ENCODE measurements at regions of chr14 and their contacts with region 1.

Region 1: GRCh38 chr14:68816262-68816942 is 23.5 kb upstream of the ZFP36L1 start:
- DNase-seq: peak; percentile 94
- ATAC-seq: peak; percentile 61
- H3K4me3 Mint-ChIP-seq: peak overlapping the region; percentile 38
- H3K27ac Mint-ChIP-seq: no peak overlapping the region
- H3K4me1 Mint-ChIP-seq: peaks cover 75% of the 10 kb centered on the region
- H3K27me3 Mint-ChIP-seq: peaks cover 2% of the 10 kb centered on the region; the same call in 1 of the 2 replicates
- CTCF ChIP-seq: peak; percentile 88

Region 2: GRCh38 chr14:67934008-67934481 is 882.4 kb before region 1 on chr14:
- CTCF ChIA-PET with region 1: interaction called, 15 read pairs
- POLR2A ChIA-PET with region 1: no interaction called
- DNase-seq: peak; percentile 28
- ATAC-seq: peak; percentile 91
- H3K4me3 Mint-ChIP-seq: peak overlapping the region; percentile 16
- H3K27ac Mint-ChIP-seq: peak overlapping the region; percentile 90
- H3K4me1 Mint-ChIP-seq: peaks cover 78% of the 10 kb centered on the region
- H3K27me3 Mint-ChIP-seq: no peaks in the 10 kb centered on the region
- CTCF ChIP-seq: no peak

Region 3: DNA sequence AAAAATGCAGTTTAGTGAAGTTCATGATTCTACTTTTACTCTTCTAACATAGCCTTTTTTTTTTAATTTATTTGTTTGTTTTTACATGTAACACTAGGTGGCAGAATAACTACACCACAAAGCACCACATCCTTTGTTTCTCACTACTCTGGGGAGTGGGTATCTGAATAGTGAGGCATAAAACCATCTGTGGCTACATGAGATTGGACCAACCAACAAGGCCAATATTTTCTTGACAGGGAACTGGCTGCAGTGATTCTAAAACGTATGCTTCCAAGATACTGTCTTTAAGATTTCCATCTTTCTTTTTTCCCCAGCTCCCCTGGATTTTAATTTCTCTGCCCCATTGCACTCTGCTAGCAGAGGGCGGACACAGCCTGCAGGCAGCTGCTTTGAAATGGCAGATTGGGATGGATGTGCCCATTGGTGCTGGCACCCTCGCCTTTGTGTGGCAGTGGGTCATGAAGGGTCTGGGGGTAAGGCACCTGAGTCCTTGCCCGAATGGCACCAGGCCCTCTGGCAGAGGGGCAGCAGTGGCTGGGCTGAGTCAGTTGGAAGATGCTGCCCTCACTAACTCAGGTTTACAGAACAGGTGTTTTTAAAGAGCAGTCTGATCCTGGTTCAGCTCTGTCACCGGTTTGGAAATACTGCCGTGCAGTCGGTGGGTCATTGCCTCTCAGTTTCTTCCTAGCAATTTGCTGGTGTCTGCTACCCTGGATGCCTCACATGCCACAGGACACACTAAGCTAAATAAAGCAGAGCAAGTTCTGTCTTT is 567.7 kb before region 1 on chr14:
- CTCF ChIA-PET with region 1: interaction called, 34 read pairs
- POLR2A ChIA-PET with region 1: no interaction called
- DNase-seq: no peak
- ATAC-seq: peak; percentile 85
- H3K4me3 Mint-ChIP-seq: no peak overlapping the region
- H3K27ac Mint-ChIP-seq: peak overlapping the region; percentile 80
- H3K4me1 Mint-ChIP-seq: peaks cover 91% of the 10 kb centered on the region
- H3K27me3 Mint-ChIP-seq: no peaks in the 10 kb centered on the region; the same call in 1 of the 2 replicates
- CTCF ChIP-seq: peak; percentile 40

Region 4: DNA sequence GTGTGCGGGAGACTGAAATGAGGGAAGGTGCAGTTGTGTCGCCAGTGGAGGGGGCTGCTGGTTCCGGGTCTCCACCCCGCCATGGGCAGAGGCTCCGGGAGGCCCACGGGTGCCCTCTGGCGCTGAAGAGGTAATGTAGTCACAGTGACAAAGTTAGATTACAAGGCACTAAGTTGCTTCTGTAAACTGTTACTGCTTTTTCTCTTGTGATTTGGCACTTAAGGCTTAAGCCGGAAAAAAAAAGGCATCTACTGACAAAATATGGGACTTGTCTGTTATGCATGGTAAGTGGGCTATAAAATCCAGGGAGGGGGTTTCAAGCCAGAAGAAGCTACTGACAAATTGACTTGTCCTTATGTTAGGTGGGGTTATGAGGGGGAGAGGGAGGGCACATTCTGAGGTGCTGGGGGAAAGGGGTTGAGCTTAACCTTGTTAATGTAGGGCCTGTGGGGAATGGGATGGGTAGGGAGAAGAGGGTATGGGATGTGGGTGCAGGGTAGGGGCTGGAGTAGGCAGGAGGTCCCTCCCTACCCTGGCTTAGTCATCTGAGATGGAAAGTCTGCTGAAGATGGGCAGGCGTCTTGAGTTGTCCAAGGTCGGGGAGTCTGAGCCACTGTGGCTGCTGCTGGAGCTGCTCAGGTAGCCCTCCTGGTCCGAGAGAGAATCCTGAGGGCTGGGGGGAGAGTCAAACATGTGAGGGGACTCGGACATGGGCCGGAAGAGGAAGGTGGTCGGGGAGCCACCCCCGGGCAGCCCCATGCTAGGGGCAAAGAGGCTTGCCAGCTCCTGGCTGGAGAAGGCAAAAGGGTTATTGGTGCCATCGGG is 27.2 kb before region 1 on chr14:
- CTCF ChIA-PET with region 1: interaction called, 37 read pairs
- POLR2A ChIA-PET with region 1: interaction called, 67 read pairs
- DNase-seq: peak; percentile 80
- ATAC-seq: peak; percentile 27
- H3K4me3 Mint-ChIP-seq: peak overlapping the region; percentile 98
- H3K27ac Mint-ChIP-seq: peak overlapping the region; percentile 85
- H3K4me1 Mint-ChIP-seq: peaks cover 44% of the 10 kb centered on the region
- H3K27me3 Mint-ChIP-seq: no peaks in the 10 kb centered on the region; the same call in 1 of the 2 replicates
- CTCF ChIP-seq: no peak

Region 5: GRCh38 chr14:68843471-68844209 is 27.2 kb after region 1 on chr14:
- CTCF ChIA-PET with region 1: interaction called, 30 read pairs
- POLR2A ChIA-PET with region 1: no interaction called
- DNase-seq: peak; percentile 80
- ATAC-seq: peak; percentile 93
- H3K4me3 Mint-ChIP-seq: peak overlapping the region; percentile 82
- H3K27ac Mint-ChIP-seq: no peak overlapping the region
- H3K4me1 Mint-ChIP-seq: peaks cover 8% of the 10 kb centered on the region
- H3K27me3 Mint-ChIP-seq: no peaks in the 10 kb centered on the region; the same call in 1 of the 2 replicates
- CTCF ChIP-seq: peak; percentile 67

Region 6: DNA sequence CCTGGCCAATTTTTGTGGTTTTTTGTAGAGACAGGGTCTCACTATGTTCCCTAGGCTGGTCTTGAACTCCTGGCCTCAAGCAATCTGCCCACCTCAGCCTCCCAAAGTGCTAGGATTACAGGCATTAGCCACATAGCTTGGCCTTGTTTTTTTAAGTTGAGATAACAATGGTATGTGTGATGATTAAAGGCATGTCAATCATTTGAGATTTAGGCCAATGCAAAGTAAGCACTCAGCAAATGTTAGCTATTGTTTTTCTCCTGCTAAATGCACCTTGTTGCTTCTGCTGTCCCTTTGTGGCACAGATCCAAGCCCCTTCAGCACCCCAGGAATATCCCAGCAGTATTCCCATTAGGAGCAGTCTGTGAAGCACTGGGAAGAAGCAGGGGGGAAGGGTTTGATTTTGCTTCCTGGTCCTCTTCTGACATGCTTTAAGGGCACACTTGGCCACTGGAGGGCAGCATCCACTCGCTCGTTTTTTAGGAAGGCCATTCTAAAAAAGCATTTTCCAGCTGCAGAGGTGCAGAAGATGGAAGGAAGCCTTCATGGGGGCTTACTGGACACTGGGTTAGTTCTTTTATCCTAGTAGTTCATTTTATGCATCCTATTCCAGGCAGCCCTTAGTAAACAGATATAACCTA is 46.7 kb after region 1 on chr14:
- CTCF ChIA-PET with region 1: no interaction called
- POLR2A ChIA-PET with region 1: no interaction called
- DNase-seq: peak; percentile 85
- ATAC-seq: peak; percentile 90
- H3K4me3 Mint-ChIP-seq: no peak overlapping the region
- H3K27ac Mint-ChIP-seq: no peak overlapping the region
- H3K4me1 Mint-ChIP-seq: peaks cover 3% of the 10 kb centered on the region; the same call in 1 of the 2 replicates
- H3K27me3 Mint-ChIP-seq: no peaks in the 10 kb centered on the region; the same call in 1 of the 2 replicates
- CTCF ChIP-seq: peak; percentile 64